ENCODE measurements at regions of chr12 and their contacts with region 1.

Region 1: GRCh38 chr12:1525858-1526257 is 68.5 kb downstream of the FBXL14 start:
- DNase-seq: no peak
- ATAC-seq: peak; percentile 14
- H3K4me3 ChIP-seq: no peak overlapping the region
- H3K4me3 Mint-ChIP-seq: peak overlapping the region; percentile 15
- H3K27ac ChIP-seq: no peak overlapping the region
- H3K27ac Mint-ChIP-seq: no peak overlapping the region
- H3K4me1 ChIP-seq: peaks cover 8 to 9% of the 10 kb centered on the region in 2 donors
- H3K4me1 Mint-ChIP-seq: peaks cover 16% of the 10 kb centered on the region
- H3K27me3 ChIP-seq: peaks cover 0 to 32% (median 22%) of the 10 kb centered on the region in 4 experiments
- H3K27me3 Mint-ChIP-seq: peaks cover 47% of the 10 kb centered on the region
- CTCF ChIP-seq: no peak

Region 2: DNA sequence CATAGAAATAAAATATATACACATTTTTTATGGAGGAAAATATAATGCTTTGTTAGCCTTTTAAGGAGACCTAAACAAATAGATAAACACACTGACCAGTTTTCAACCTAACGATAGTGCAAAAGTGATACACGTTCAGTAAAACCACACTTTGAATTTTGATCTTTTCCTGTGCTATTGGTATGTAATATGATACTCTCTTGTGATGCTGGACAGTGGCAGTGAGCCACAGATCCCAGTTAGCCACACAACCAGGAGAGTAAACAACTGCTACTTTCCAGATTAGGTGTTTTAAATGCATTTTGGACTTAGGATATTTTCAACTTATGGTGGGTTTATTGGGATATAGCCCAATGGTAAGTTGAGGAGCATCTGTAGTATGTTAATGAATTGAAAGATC is 291.8 kb before region 1 on chr12:
- CTCF ChIA-PET with region 1: no interaction called
- POLR2A ChIA-PET with region 1: interaction called, 12 read pairs
- intact Hi-C with region 1: no loop called
- DNase-seq: no peak
- ATAC-seq: no peak
- H3K4me3 ChIP-seq: no peak overlapping the region
- H3K4me3 Mint-ChIP-seq: no peak overlapping the region
- H3K27ac ChIP-seq: no peak overlapping the region
- H3K27ac Mint-ChIP-seq: no peak overlapping the region
- H3K4me1 ChIP-seq: no peaks in the 10 kb centered on the region
- H3K4me1 Mint-ChIP-seq: no peaks in the 10 kb centered on the region
- H3K27me3 ChIP-seq: no peaks in the 10 kb centered on the region
- H3K27me3 Mint-ChIP-seq: no peaks in the 10 kb centered on the region
- CTCF ChIP-seq: no peak

Region 3: GRCh38 chr12:1313906-1314305 is 212.0 kb before region 1 on chr12:
- CTCF ChIA-PET with region 1: no interaction called
- POLR2A ChIA-PET with region 1: no interaction called
- intact Hi-C with region 1: no loop called
- DNase-seq: no peak
- ATAC-seq: no peak
- H3K4me3 ChIP-seq: no peak overlapping the region
- H3K4me3 Mint-ChIP-seq: no peak overlapping the region
- H3K27ac ChIP-seq: no peak overlapping the region
- H3K27ac Mint-ChIP-seq: no peak overlapping the region
- H3K4me1 ChIP-seq: no peaks in the 10 kb centered on the region
- H3K4me1 Mint-ChIP-seq: peaks cover 5% of the 10 kb centered on the region
- H3K27me3 ChIP-seq: no peaks in the 10 kb centered on the region
- H3K27me3 Mint-ChIP-seq: no peaks in the 10 kb centered on the region
- CTCF ChIP-seq: no peak

Measured in B cell (primary cell).